ENCODE measurements at regions of chr11 and their contacts with region 1.

Region 1: GRCh38 chr11:30917859-30918478 is 331.8 kb upstream of the MPPED2 start:
- DNase-seq: no peak
- H3K4me3 Mint-ChIP-seq: no peak overlapping the region
- H3K27ac Mint-ChIP-seq: no peak overlapping the region
- H3K4me1 Mint-ChIP-seq: no peaks in the 10 kb centered on the region
- H3K27me3 Mint-ChIP-seq: peaks cover 2% of the 10 kb centered on the region

Region 2: GRCh38 chr11:29343465-29344333 is 1574.3 kb before region 1 on chr11:
- intact Hi-C with region 1: loop called (anchors 5 kb)
- DNase-seq: peak; percentile 12
- H3K4me3 Mint-ChIP-seq: no peak overlapping the region
- H3K27ac Mint-ChIP-seq: no peak overlapping the region
- H3K4me1 Mint-ChIP-seq: no peaks in the 10 kb centered on the region
- H3K27me3 Mint-ChIP-seq: no peaks in the 10 kb centered on the region

Region 3: DNA sequence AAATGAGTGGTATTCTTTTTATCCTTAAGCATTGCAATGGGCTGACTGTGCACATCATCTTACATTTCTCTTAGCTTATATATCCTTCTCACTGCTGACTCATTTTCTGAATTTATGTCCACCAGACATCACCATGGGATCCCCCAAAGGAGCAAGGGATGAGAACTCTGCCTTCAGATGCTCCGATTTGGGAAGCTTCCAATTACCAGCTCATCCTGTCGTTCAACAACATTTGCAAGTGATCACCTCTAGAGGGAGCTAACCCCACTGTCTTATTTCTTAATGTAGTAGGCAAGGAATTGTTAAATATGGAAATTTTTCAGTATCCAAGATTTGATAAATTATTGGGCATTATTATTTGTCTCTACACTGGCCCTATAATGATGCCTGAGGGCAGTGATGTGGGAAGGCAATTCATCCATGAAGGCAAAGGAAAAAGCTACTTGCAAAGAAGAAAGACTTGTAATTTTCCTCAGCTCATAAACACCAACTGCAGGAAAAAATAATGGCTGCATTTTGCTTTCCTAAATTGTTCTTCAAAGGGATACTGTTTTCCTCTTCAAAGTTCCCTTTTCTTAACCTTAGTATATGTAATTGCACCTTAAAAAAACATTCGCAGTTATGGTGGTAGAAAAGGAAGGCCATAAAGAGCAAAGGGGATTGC is 789.6 kb before region 1 on chr11:
- intact Hi-C with region 1: loop called (anchors 5 kb)
- DNase-seq: no peak
- H3K4me3 Mint-ChIP-seq: no peak overlapping the region
- H3K27ac Mint-ChIP-seq: no peak overlapping the region
- H3K4me1 Mint-ChIP-seq: no peaks in the 10 kb centered on the region
- H3K27me3 Mint-ChIP-seq: no peaks in the 10 kb centered on the region

Region 4: DNA sequence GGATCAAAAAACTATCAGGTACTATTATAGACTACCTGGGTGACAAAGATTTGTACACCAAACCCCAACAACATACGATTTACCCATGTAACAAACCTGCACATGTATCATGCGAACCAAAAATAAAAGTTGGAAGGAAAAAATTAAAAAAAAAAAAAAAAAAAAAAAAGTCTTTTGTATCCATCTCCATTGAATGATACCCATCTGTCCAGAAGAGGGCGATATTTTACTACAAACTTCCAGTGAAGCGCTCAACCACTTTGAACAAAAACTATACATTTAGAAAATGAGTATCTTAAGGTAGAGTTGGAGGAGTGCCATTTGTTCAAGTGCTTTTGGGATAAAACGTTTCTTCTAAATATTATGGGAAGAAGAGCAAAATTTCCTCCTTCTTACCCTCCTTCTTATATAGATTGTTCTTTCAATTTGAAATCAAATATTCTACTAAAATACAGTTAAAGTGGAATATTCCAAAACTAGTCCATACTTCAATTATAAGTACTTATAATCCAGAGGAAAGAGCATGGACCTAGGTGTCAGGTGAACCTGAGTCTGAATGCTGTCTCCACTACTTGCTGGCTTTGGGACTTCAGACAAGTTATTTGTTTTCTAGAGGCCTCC is 571.8 kb before region 1 on chr11:
- intact Hi-C with region 1: loop called (anchors 1 kb)
- DNase-seq: no peak
- H3K4me3 Mint-ChIP-seq: no peak overlapping the region
- H3K27ac Mint-ChIP-seq: no peak overlapping the region
- H3K4me1 Mint-ChIP-seq: peaks cover 6% of the 10 kb centered on the region
- H3K27me3 Mint-ChIP-seq: peaks cover 3% of the 10 kb centered on the region

Region 5: GRCh38 chr11:30949838-30950237 is 31.9 kb after region 1 on chr11:
- intact Hi-C with region 1: no loop called
- DNase-seq: no peak
- H3K4me3 Mint-ChIP-seq: no peak overlapping the region
- H3K27ac Mint-ChIP-seq: no peak overlapping the region
- H3K4me1 Mint-ChIP-seq: no peaks in the 10 kb centered on the region
- H3K27me3 Mint-ChIP-seq: no peaks in the 10 kb centered on the region

Region 6: DNA sequence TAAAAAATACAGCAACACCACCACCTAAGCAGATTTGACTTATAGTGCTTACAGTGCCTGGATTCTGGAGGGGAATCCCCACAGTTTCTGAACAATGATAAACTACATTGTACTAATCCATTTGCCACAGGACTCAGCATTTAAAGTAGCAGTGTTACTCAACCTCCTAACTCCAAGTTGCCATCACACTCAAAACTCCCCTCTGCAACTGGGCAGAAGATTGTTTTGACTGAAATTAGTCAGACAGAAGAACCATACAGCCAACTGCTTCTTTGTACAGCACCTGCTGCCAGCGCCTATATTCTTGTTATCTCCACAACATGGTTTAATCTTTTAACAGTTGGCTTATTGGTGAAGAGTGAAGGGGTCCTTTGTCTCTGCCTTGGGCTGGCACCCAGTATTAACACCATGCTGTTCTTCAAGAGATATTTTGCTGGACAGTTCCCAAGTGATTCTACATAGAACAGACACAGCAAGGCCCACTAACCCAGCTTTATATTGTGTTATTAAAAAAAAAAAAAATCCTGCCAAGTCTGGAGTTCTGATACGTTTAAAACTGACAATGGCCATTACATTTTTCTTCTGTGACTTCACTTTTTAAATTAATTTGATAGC is 178.3 kb after region 1 on chr11:
- intact Hi-C with region 1: no loop called
- DNase-seq: no peak
- H3K4me3 Mint-ChIP-seq: no peak overlapping the region
- H3K27ac Mint-ChIP-seq: no peak overlapping the region
- H3K4me1 Mint-ChIP-seq: no peaks in the 10 kb centered on the region
- H3K27me3 Mint-ChIP-seq: no peaks in the 10 kb centered on the region

Measured in activated T-helper 1 cell treated with anti-CD3 and anti-CD28 coated beads, Interleukin-12 subunit alpha, Interleukin-12 subunit beta, Interleukin-2, Interleukin-4 antibody, amounts not matched to agents 30 ng/mL and 10 ng/mL and 1 ng/mL, durations not matched to agents 14 hours and 24 hours and 36 hours (primary cell).